GM10248 (cell line): ENCODE measurements at regions of chr15 and their contacts with region 1.

Region 1: DNA sequence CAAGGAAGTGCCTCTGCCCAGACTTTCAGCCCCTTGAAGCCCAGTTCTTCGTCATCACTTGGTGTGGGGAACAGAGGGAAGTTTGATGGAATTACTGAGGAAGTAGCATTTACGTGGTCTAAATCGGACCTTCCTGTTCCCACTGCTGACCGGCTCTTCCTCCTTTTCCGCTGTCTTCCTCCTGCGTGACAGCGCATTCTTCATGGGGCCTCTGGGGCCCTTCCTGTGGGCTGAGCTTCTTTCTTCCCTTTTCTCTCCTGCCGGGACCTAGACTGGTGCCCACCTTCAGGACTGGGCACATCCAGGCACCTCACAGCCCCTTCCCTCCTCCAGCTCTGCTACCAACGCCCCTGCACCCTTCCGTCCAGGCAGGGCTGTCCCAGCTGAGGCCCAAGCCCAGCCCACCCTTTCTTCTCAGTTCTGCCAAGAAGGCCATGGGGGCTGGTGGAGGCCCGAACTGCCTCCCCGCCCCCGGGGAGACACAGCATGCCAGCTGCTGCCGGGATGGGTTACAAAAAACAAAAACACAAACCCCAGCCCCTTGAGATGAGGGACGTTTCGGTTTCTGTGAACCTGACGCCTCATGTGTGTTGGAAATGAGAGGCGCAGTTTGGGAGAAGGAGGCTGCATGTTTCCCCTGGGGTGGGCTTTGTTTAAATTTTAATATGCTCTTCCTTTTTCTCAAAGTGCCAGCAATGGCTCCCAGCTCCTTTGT is 19.1 kb downstream of the ZNF710 start:
- DNase-seq: no peak
- CTCF ChIP-seq: no peak

Region 2: DNA sequence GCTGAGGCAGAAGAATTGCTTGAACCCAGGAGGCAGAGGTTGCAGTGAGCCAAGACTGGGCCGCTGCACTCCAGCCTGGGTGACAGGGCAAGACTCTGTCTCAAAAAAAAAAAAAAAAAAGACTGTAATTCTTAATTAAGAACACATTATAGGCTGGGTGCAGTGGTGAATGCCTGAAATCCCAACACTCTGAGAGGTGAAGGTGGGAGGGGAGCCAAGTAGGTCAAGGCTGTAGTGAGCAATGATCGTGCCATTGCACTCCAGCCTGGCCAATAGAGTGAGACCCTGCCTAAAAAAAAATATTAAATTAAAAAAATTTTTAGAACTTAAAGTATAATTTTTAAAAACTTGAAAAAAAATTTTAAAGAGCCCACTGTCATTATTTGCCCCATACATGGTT is 94.0 kb before region 1 on chr15:
- CTCF ChIA-PET with region 1: no interaction called
- POLR2A ChIA-PET with region 1: no interaction called
- DNase-seq: no peak
- CTCF ChIP-seq: no peak

Region 3: GRCh38 chr15:90001683-90002427 is 18.3 kb before region 1 on chr15:
- CTCF ChIA-PET with region 1: interaction called, 29 read pairs
- POLR2A ChIA-PET with region 1: no interaction called
- DNase-seq: peak; percentile 82
- CTCF ChIP-seq: no peak

Region 4: DNA sequence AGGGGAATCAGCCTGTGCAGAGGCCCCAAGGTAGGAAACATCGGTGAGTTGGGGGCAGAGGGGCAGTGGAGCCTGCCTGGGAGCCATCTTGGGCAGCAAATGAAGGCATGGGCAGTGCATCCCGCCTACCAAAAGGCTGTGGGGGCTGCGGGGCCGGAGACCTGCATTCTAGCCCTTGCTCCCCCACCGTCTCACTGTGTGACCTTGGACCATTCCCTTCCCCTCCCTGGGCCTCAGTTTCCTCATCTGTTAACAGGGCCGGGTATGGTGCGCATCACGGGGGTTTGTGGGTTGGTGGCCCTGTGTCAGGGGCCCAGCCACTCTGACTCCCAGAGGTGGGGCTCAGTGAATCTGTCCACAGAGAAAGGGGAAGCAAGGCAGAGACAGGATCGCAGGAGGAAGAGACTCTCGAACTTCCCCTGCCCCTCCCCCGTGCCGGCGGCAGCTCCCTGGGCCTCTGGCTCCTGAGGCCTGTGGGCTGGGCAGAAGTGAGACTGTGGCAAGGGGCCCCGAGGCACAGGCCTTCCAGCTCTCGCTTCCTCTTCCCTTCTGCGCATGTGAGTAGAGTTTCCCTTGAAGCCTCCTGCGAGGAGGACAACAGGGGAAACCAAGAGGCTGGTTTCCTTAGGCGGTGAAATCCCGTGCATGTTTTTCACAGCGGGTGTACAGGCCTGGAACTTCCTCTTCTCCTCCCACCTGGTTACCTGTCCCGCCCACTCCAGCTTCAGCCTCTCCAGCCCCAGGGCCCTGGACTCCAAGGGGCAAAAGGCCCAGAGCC is 39.2 kb after region 1 on chr15:
- CTCF ChIA-PET with region 1: no interaction called
- POLR2A ChIA-PET with region 1: no interaction called
- DNase-seq: peak; percentile 88
- CTCF ChIP-seq: no peak